Psoas muscle (tissue), 8 donors: ENCODE measurements at regions of chr10 and their contacts with region 1.

Region 1: GRCh38 chr10:31808258-31809218 is 120.1 kb downstream of the ARHGAP12 start:
- DNase-seq: peak; percentile 23 to 61
- ATAC-seq: peak; percentile 86 to 93 (median 92)
- H3K4me3 ChIP-seq: peak overlapping the region; percentile 62
- H3K27ac ChIP-seq: peak overlapping the region; percentile 76
- H3K4me1 ChIP-seq: no peaks in the 10 kb centered on the region
- H3K27me3 ChIP-seq: no peaks in the 10 kb centered on the region
- CTCF ChIP-seq: peak; percentile 70

Region 2: GRCh38 chr10:30722956-30723620 is 1085.5 kb before region 1 on chr10:
- intact Hi-C with region 1: loop called in 1 of 2 experiments (anchors 10 kb)
- DNase-seq: no peak
- ATAC-seq: no peak
- H3K4me3 ChIP-seq: no peak overlapping the region
- H3K27ac ChIP-seq: no peak overlapping the region
- H3K4me1 ChIP-seq: no peaks in the 10 kb centered on the region
- H3K27me3 ChIP-seq: no peaks in the 10 kb centered on the region
- CTCF ChIP-seq: no peak